ENCODE measurements at regions of chr3 and their contacts with region 1.

Region 1: GRCh38 chr3:164918905-164919304 is 159.4 kb downstream of the SI start:
- DNase-seq: no peak
- ATAC-seq: no peak
- H3K4me3 ChIP-seq: no peak overlapping the region
- H3K4me1 ChIP-seq: no peaks in the 10 kb centered on the region
- CTCF ChIP-seq: no peak

Region 2: DNA sequence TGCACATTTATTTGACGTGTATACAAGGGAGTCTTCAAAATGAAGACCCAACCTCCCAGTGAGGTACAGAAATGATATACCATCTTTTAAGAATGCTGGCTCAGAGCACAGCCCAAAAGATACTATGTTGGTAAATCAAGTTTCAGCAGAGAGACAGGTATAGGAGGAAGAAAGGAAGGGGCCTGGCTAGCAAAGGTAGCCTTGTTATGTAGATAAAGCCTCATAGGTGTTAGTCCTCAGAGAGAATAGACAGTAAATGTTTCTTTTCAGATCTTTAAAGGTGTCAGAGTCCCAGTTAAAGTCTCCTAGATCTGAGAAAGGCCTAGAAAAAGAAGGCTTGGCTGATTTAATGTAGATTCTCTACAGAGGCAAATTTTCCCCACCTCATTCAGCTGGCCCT is 54.5 kb before region 1 on chr3:
- intact Hi-C with region 1: loop called in 1 of 2 experiments (anchors 10 kb)
- DNase-seq: no peak
- ATAC-seq: no peak
- H3K4me3 ChIP-seq: no peak overlapping the region
- H3K4me1 ChIP-seq: no peaks in the 10 kb centered on the region
- CTCF ChIP-seq: no peak

Region 3: GRCh38 chr3:164984947-164985346 is 66.0 kb after region 1 on chr3:
- intact Hi-C with region 1: no loop called
- DNase-seq: no peak
- ATAC-seq: no peak
- H3K4me3 ChIP-seq: no peak overlapping the region
- H3K4me1 ChIP-seq: no peaks in the 10 kb centered on the region
- CTCF ChIP-seq: no peak